GM18951 (cell line): ENCODE measurements at regions of chr11 and their contacts with region 1.

Region 1: GRCh38 chr11:118689851-118690552 is 10.6 kb upstream of the TREH start:
- POLR2A ChIP-seq: no peak

Region 2: DNA sequence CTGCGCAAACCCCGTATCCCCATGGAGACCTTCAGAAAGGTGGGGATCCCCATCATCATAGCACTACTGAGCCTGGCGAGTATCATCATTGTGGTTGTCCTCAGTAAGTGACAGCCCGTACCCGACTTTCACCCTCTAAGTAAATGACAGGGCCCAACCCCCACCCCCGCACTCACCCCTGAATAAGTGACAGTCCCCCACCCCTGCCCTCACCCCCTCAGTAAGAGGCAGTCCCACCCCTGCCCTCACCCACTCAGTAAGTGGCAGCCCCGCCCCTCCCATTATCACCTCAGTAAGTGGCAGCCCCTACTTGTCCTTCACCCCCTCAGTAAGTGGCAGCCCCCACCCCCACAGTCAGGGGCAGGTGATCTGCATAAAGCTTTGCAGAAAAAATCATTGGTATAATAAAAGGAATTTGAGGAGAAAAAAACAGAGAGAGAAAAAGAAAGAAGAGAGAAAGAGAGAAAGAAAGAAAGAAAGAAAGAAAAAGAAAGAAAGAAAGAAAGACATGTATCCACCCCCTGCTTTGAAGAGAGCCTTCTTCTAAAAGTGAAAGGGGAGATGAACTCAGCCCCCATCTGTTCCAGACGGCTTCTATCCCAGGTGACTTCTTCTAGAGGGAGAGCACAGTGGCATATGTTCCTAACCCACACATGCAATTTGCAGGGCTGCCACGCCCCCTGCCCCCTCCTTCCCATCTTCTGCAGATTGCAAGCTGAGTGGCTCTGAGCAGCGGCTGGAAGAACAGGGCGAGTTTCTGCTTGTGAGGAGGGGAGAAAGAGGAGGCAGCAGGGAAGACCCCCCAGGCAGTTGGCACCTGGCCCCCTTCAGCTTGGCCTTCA is 590.8 kb before region 1 on chr11:
- in situ Hi-C with region 1: no loop called
- POLR2A ChIP-seq: no peak

Region 3: GRCh38 chr11:118530408-118531339 is 159.3 kb before region 1 on chr11 and contains the start of gene TMEM25:
- in situ Hi-C with region 1: no loop called
- POLR2A ChIP-seq: peak; percentile 52

Region 4: DNA sequence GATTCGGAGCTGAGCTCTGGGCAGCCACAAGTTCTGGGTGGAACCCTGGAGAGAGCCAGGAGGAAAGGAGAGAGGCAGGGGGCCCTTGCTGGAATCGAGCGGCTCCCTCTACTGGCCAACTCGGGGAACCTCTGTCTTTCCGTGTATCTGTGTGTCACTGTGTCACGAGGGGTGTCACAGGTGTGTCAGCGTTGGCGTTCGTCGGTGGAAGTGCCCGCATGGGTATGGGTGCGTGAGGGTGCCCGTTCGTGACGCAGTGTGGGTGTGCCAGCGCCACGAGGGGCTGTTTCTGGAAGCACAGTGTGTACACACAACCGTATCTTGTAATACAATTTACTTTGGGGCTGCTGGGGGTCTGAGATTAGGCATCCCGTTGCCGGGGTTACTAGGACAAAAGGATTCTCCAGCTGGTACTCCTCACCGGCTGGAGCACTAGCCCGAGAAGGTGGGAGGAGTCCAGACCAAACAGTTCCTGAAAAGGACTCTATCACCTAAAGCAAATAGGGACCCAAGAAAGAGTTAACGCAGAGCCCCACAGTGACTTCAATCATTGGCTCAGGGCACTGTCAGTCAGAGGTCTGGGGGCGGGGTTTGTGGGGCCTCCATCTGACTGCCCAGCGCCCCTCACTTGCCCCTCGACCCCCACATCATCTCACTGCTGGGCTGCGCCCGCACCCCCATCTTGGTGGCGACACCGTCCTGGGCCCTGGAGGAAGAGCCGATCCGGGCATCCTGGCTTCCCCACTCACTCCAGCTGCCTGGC is 238.3 kb after region 1 on chr11:
- in situ Hi-C with region 1: loop called (anchors 25 kb)
- POLR2A ChIP-seq: no peak